Activated B cell treated with CpG ODN at 0.5 μM for 24 hours (primary cell): ENCODE measurements at regions of chr3 and their contacts with region 1.

Region 1: GRCh38 chr3:128969993-128970739 is 23.7 kb downstream of the CFAP92 start:
- DNase-seq: peak; percentile 28
- ATAC-seq: peak; percentile 50
- H3K4me3 Mint-ChIP-seq: no peak overlapping the region
- H3K27ac Mint-ChIP-seq: no peak overlapping the region
- H3K4me1 Mint-ChIP-seq: peaks cover 15% of the 10 kb centered on the region
- H3K27me3 Mint-ChIP-seq: no peaks in the 10 kb centered on the region
- CTCF ChIP-seq: peak; percentile 70

Region 2: GRCh38 chr3:128369864-128370642 is 600.1 kb before region 1 on chr3:
- CTCF ChIA-PET with region 1: no interaction called
- POLR2A ChIA-PET with region 1: no interaction called
- intact Hi-C with region 1: no loop called
- DNase-seq: no peak
- ATAC-seq: peak; percentile 82
- H3K4me3 Mint-ChIP-seq: no peak overlapping the region
- H3K27ac Mint-ChIP-seq: no peak overlapping the region
- H3K4me1 Mint-ChIP-seq: peaks cover 30% of the 10 kb centered on the region
- H3K27me3 Mint-ChIP-seq: no peaks in the 10 kb centered on the region
- CTCF ChIP-seq: no peak

Region 3: DNA sequence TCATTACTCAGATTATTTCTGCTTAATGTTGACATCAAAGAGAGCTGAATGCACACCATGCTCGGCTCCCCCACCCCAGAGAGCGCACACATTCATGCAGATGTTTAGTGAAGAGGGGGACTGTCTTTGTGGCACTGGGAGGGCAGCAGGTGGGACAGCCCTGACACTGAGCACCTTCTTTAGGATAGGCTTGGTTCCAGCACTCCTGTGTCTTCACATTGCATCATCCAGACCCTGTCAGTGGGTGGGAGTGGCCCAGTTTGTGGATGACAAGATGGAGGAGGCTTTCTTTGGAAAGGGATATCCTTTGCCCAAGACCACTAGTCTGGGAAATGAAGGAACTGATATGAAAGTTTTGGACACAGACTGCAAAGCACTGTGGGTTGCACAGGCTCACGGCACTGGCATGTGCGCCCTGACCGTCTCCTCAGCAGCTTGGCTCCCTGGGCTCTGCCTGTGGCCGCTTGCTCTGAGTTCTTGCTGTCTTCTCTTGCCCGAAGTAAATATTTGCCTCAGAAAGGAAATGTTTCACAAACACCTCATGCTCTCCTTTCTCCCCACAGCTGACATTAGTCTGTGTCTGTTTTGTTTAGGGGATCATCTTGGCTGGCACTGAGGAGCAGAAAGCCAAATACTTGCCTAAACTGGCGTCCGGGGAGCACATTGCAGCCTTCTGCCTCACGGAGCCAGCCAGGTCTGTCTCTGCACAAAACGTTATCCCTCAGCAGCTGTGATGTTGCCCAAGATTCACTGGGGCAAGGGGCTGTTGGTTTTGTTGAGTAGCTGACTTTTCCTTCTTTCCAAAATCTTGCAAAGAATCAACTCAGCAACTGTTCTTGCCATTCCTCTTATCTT is 74.1 kb before region 1 on chr3:
- CTCF ChIA-PET with region 1: no interaction called
- POLR2A ChIA-PET with region 1: no interaction called
- intact Hi-C with region 1: no loop called
- DNase-seq: no peak
- ATAC-seq: no peak
- H3K4me3 Mint-ChIP-seq: no peak overlapping the region
- H3K27ac Mint-ChIP-seq: no peak overlapping the region
- H3K4me1 Mint-ChIP-seq: no peaks in the 10 kb centered on the region
- H3K27me3 Mint-ChIP-seq: no peaks in the 10 kb centered on the region
- CTCF ChIP-seq: no peak

Region 4: DNA sequence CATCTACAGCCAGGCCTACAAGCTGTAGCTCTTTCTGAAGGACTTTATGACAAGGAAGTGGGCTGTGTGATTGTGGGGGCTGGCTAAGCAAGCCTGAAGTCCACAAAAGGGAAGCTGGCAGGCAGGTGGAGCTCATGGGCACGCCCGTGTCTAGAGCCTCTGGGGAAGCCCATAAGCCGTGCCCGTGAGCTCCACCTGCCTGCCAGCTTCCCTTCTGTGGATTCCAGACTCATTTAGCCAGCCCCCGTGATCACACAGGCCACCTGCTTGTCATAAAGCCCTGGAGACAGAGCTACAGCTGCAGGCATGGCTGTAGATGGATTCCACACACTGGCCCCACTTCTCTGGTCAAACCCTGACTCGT is 46.2 kb after region 1 on chr3:
- CTCF ChIA-PET with region 1: interaction called, 63 read pairs
- POLR2A ChIA-PET with region 1: interaction called, 11 read pairs
- intact Hi-C with region 1: loop called (anchors 1 kb)
- DNase-seq: peak; percentile 59
- ATAC-seq: peak; percentile 87
- H3K4me3 Mint-ChIP-seq: peak overlapping the region; percentile 55
- H3K27ac Mint-ChIP-seq: peak overlapping the region; percentile 80
- H3K4me1 Mint-ChIP-seq: peaks cover 41% of the 10 kb centered on the region
- H3K27me3 Mint-ChIP-seq: no peaks in the 10 kb centered on the region
- CTCF ChIP-seq: no peak

Region 5: GRCh38 chr3:129052675-129053074 is 82.5 kb after region 1 on chr3:
- CTCF ChIA-PET with region 1: interaction called, 56 read pairs
- POLR2A ChIA-PET with region 1: no interaction called
- intact Hi-C with region 1: loop called (anchors 1 kb)
- DNase-seq: no peak
- ATAC-seq: no peak
- H3K4me3 Mint-ChIP-seq: no peak overlapping the region
- H3K27ac Mint-ChIP-seq: no peak overlapping the region
- H3K4me1 Mint-ChIP-seq: peaks cover 6% of the 10 kb centered on the region
- H3K27me3 Mint-ChIP-seq: peaks cover 23% of the 10 kb centered on the region
- CTCF ChIP-seq: no peak

Region 6: GRCh38 chr3:129316131-129317013 is 346.2 kb after region 1 on chr3:
- CTCF ChIA-PET with region 1: interaction called, 38 read pairs
- POLR2A ChIA-PET with region 1: interaction called, 10 read pairs
- intact Hi-C with region 1: loop called (anchors 2 kb)
- DNase-seq: peak; percentile 69
- ATAC-seq: peak; percentile 38
- H3K4me3 Mint-ChIP-seq: peak overlapping the region; percentile 76
- H3K27ac Mint-ChIP-seq: no peak overlapping the region
- H3K4me1 Mint-ChIP-seq: peaks cover 24% of the 10 kb centered on the region
- H3K27me3 Mint-ChIP-seq: peaks cover 17% of the 10 kb centered on the region
- CTCF ChIP-seq: no peak

Region 7: GRCh38 chr3:129383292-129383860 is 413.2 kb after region 1 on chr3:
- CTCF ChIA-PET with region 1: interaction called, 14 read pairs
- POLR2A ChIA-PET with region 1: no interaction called
- intact Hi-C with region 1: no loop called
- DNase-seq: peak; percentile 26
- ATAC-seq: peak; percentile 98
- H3K4me3 Mint-ChIP-seq: no peak overlapping the region
- H3K27ac Mint-ChIP-seq: no peak overlapping the region
- H3K4me1 Mint-ChIP-seq: no peaks in the 10 kb centered on the region
- H3K27me3 Mint-ChIP-seq: no peaks in the 10 kb centered on the region
- CTCF ChIP-seq: peak; percentile 23

Region 8: GRCh38 chr3:130516645-130517512 is 1546.7 kb after region 1 on chr3 and contains the start of gene COL6A6:
- CTCF ChIA-PET with region 1: no interaction called
- POLR2A ChIA-PET with region 1: no interaction called
- intact Hi-C with region 1: no loop called
- DNase-seq: no peak
- ATAC-seq: no peak
- H3K4me3 Mint-ChIP-seq: no peak within 1 kb of the TSS
- H3K27ac Mint-ChIP-seq: no peak within 1 kb of the TSS
- H3K4me1 Mint-ChIP-seq: no peaks in the 10 kb centered on the region
- H3K27me3 Mint-ChIP-seq: peaks cover 34% of the 10 kb centered on the region
- CTCF ChIP-seq: no peak
- total RNA-seq, gene COL6A6: not detected in 2 replicates